T-cell (primary cell): ENCODE measurements at regions of chr4 and their contacts with region 1.

Region 1: DNA sequence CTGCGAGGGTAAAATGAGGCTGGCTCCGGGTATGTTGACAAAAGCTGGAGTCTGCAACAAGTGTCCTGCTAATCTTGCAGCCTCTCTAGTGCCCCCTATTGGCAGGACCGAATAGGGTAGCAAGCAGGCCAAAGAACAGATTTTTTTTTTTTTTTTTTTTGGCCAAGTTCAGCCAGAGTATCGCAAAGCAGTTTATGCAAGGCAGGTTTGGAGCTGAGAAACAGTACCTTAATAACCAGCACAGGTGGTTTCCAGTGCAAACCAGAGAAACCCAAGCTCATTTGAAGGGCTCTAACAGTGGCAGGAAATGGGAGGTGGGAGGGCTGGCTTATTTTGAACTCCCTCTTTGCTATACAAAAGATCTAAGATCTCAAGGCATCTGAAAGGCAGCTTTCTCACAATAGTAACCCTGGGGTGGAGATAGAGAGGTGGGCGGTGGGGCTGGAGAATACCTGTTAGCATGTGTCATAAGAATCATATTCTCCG is 38.2 kb upstream of the OCIAD2 start:
- DNase-seq: peak in 32 of 35 experiments; percentile 3 to 71 (median 36)
- ATAC-seq: peak; percentile 66 to 99 (median 87)
- H3K4me3 ChIP-seq: peak overlapping the region in 1 of 2 donors; percentile 23
- H3K4me3 Mint-ChIP-seq: peak overlapping the region in 2 of 3 donors; percentile 25 to 62
- H3K27ac ChIP-seq: no peak overlapping the region
- H3K27ac Mint-ChIP-seq: peak overlapping the region; percentile 19 to 62
- H3K4me1 ChIP-seq: peaks cover 12 to 17% of the 10 kb centered on the region in 2 experiments
- H3K4me1 Mint-ChIP-seq: peaks cover 23 to 31% (median 28%) of the 10 kb centered on the region in 3 donors
- H3K27me3 ChIP-seq: peaks cover 0 to 4% of the 10 kb centered on the region in 2 experiments
- H3K27me3 Mint-ChIP-seq: peaks cover 0 to 3% of the 10 kb centered on the region in 2 donors

Region 2: DNA sequence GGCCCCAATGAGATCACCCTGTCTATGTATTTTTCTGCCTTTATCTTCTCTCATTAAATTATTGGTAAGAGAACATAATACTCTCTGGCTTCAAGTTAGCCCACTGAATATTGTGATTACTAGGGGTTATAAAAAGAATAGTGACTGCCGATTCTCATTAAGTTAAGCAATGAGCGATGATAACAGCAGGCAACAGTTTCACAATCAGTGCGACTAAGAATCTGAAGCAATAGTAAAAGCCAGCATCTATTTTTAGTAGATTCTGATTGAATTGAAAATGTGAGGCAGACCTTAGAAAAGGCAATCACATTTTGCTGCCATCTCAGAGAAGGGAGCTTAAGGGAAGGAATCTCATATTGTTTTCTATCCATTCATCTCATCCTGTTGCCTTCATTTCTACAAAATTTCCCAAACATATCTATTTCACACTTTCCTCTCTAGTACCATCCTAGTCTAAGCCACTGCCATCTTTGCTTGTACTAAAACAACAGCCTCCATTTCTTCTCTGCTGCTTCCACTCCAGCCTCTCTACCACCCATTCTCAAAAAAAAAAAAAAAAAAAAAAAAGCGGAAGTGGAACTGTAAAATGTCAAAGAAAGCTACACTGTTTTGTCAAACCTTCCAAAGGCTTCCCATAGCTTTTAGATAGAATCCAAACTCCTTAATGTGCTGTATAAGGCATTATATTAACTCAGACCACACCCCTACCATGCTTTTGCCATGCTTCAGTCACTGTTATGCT is 1968.8 kb before region 1 on chr4:
- CTCF ChIA-PET with region 1: no interaction called
- POLR2A ChIA-PET with region 1: no interaction called
- DNase-seq: no peak
- ATAC-seq: no peak
- H3K4me3 ChIP-seq: no peak overlapping the region
- H3K4me3 Mint-ChIP-seq: no peak overlapping the region
- H3K27ac ChIP-seq: no peak overlapping the region
- H3K27ac Mint-ChIP-seq: no peak overlapping the region
- H3K4me1 ChIP-seq: no peaks in the 10 kb centered on the region
- H3K4me1 Mint-ChIP-seq: no peaks in the 10 kb centered on the region
- H3K27me3 ChIP-seq: no peaks in the 10 kb centered on the region
- H3K27me3 Mint-ChIP-seq: peaks cover 10 to 23% of the 10 kb centered on the region in 2 donors

Region 3: GRCh38 chr4:48653217-48654014 is 291.4 kb before region 1 on chr4:
- CTCF ChIA-PET with region 1: interaction called in 1 of 2 experiments, 12 read pairs
- POLR2A ChIA-PET with region 1: no interaction called
- DNase-seq: peak in 9 of 35 experiments; percentile 3 to 20 (median 6)
- ATAC-seq: peak in 3 of 4 experiments; percentile 53 to 65 (median 54)
- H3K4me3 ChIP-seq: no peak overlapping the region
- H3K4me3 Mint-ChIP-seq: no peak overlapping the region
- H3K27ac ChIP-seq: no peak overlapping the region
- H3K27ac Mint-ChIP-seq: peak overlapping the region in 1 of 2 donors; percentile 71
- H3K4me1 ChIP-seq: peaks cover 0 to 6% of the 10 kb centered on the region in 2 experiments
- H3K4me1 Mint-ChIP-seq: peaks cover 46 to 53% (median 49%) of the 10 kb centered on the region in 3 donors
- H3K27me3 ChIP-seq: no peaks in the 10 kb centered on the region
- H3K27me3 Mint-ChIP-seq: no peaks in the 10 kb centered on the region

Region 4: GRCh38 chr4:48844843-48845242 is 100.0 kb before region 1 on chr4:
- CTCF ChIA-PET with region 1: interaction called in 1 of 2 experiments, 11 read pairs
- POLR2A ChIA-PET with region 1: no interaction called
- DNase-seq: no peak
- ATAC-seq: no peak
- H3K4me3 ChIP-seq: no peak overlapping the region
- H3K4me3 Mint-ChIP-seq: no peak overlapping the region
- H3K27ac ChIP-seq: no peak overlapping the region
- H3K27ac Mint-ChIP-seq: no peak overlapping the region
- H3K4me1 ChIP-seq: no peaks in the 10 kb centered on the region
- H3K4me1 Mint-ChIP-seq: peaks cover 16 to 22% (median 17%) of the 10 kb centered on the region in 3 donors
- H3K27me3 ChIP-seq: no peaks in the 10 kb centered on the region
- H3K27me3 Mint-ChIP-seq: no peaks in the 10 kb centered on the region